Activated CD8-positive, alpha-beta T cell treated with anti-CD3 and anti-CD28 coated beads for 36 hours (primary cell): ENCODE measurements at regions of chr22 and their contacts with region 1.

Region 1: DNA sequence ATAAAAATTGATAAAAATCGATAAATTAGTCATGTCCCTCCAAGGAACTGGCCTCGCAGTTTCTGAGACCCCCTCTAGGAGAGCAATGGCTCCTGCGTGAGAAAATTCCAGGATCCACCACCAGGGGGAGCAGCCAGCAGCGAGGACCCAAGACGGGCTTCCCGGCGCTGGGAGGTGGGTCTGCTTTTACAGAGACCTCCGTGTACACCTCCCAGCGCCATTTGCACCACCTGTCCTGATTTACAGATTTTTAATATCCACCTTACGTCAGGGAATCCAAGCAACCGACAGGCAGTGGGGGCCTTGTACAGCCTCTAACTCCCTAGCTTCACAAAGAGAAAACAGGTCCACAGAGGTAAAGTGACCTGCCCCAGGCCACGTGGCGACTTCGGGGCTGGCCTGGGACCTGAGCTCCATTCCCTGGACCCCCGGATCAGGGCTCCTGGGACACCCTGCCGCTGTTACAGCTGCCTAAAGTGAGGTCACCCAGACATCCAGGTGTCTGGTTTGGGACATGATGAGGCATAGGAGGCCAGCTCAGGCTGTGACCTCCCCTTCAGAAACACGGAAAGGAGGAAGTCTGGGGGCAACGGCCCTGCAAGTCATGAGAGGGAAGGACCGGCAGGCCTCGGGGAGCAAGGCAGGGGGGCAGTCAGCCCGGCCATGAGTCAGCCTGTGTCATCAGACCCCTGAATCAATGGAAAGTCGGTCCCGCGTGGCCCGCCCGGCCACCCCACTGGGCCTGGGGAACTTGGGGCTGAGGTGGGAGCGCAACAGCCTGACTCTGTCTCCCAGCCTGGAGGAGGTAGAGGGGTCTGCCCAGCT is 3.5 kb downstream of the OSM start:
- DNase-seq: peak; percentile 88
- ATAC-seq: no peak
- H3K4me3 Mint-ChIP-seq: peak overlapping the region; percentile 95
- H3K27ac Mint-ChIP-seq: peak overlapping the region; percentile 83
- H3K4me1 Mint-ChIP-seq: peaks cover 31% of the 10 kb centered on the region
- H3K27me3 Mint-ChIP-seq: no peaks in the 10 kb centered on the region
- CTCF ChIP-seq: peak; percentile 100

Region 2: DNA sequence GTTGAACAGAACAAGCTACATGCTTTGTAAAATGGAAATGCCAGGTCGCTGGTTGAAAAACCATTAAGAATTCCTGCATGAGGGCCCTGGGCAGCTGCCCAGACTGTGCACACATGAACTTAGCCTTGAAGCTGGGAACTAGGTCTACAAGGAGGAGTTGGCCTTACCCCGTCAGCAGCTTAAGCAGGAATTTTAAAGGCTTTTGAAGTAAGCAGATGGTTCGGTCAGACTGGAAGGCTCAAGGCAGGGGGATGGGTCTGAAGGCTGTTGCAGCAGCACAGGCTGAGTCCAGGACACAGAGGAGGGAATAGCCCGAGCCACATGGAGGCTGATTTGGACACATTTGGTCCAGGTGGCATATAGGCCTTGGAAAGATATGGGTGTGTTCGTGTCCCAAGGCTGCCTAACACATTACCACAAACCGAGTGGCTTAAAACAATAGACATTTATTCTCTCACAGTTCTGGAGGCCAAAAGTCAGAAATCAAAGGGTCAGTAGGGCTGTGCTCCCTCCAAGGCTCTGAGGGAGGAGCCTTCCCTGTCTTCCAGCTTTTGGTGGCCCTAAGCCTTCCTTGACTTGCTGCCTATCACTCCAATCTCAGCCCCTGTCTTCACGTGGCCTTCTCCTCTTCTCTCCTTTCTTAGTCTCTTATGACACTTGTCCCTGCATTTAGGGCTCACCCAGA is 28.2 kb before region 1 on chr22:
- CTCF ChIA-PET with region 1: no interaction called
- POLR2A ChIA-PET with region 1: no interaction called
- intact Hi-C with region 1: no loop called
- DNase-seq: no peak
- ATAC-seq: no peak
- H3K4me3 Mint-ChIP-seq: no peak overlapping the region
- H3K27ac Mint-ChIP-seq: no peak overlapping the region
- H3K4me1 Mint-ChIP-seq: peaks cover 2% of the 10 kb centered on the region
- H3K27me3 Mint-ChIP-seq: no peaks in the 10 kb centered on the region
- CTCF ChIP-seq: no peak

Region 3: GRCh38 chr22:30277547-30278344 is 14.6 kb after region 1 on chr22:
- CTCF ChIA-PET with region 1: interaction called, 45 read pairs
- POLR2A ChIA-PET with region 1: interaction called, 14 read pairs
- intact Hi-C with region 1: no loop called
- DNase-seq: no peak
- ATAC-seq: no peak
- H3K4me3 Mint-ChIP-seq: no peak overlapping the region
- H3K27ac Mint-ChIP-seq: no peak overlapping the region
- H3K4me1 Mint-ChIP-seq: peaks cover 46% of the 10 kb centered on the region
- H3K27me3 Mint-ChIP-seq: no peaks in the 10 kb centered on the region
- CTCF ChIP-seq: no peak